Activated naive CD4-positive, alpha-beta T cell treated with anti-CD3 and anti-CD28 coated beads for 36 hours (primary cell): ENCODE measurements at regions of chr12 and their contacts with region 1.

Region 1: DNA sequence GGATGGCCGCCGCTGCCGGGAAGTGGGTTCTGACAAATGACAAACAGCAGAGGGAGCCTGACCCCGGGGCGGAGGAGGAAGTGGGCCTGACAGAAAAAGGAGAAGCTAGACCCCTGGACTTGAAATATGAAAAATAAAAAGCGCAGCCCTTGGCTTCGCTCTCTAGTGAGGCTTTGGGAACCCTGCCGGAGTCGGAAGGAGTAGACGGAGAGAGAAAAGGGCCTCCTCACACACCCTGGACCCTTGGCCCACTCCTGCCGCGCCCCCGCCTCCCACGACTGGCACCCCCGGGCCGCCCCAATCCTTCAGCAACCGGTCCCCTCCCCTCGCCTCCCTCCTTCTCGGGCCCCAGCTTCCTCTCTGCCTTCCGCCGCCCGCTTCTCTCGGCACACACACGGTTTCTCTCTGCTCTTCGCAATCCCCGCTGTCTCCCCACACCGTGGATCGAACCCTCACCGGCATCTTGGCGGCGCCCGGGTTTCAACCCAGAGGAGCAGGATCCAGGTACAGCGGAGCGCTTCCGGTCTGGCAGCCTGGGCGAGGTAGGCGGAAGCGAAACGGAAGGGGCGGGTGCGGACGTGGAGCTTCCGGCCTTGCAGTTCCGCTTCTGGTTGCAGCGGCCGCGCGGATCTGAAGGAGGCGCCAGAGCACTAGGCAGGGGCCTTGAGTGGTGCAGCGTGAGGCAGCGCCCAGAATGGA is at the start of gene ARPC3:
- DNase-seq: peak; percentile 98
- H3K4me3 Mint-ChIP-seq: peak within 1 kb of the TSS; percentile 100
- H3K27ac Mint-ChIP-seq: peak within 1 kb of the TSS; percentile 100
- H3K4me1 Mint-ChIP-seq: peaks cover 38% of the 10 kb centered on the region
- H3K27me3 Mint-ChIP-seq: no peaks in the 10 kb centered on the region
- total RNA-seq, gene ARPC3: 279 to 311 TPM

Region 2: DNA sequence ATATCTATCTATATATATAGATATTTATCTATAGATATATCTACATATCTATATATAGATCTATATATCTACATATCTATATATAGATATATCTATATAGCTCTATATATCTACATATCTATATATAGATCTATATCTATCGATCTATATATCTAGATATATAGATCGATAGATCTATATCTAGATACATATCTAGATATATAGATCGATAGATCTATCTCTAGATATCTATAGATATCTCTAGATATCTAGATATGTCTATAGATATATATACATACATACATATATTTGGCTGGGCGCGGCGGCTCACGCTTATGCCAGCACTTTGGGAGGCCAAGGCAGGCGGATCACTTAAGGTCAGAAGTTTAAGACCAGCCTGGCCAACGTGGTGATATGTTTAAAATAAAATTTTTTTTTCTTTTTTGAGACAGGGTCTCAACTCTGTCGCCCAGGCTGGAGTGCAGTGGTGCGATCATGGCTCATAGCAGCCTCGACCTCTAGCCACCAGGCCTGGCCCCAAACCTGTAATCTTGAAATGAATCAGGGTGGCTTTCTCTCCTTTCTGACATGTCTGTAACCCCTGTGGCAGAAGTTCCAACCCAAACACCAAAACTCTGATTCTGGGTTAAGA is 17.9 kb before region 1 on chr12:
- CTCF ChIA-PET with region 1: interaction called, 29 read pairs
- intact Hi-C with region 1: no loop called
- DNase-seq: peak; percentile 31
- H3K4me3 Mint-ChIP-seq: no peak overlapping the region
- H3K27ac Mint-ChIP-seq: peak overlapping the region; percentile 36
- H3K4me1 Mint-ChIP-seq: peaks cover 3% of the 10 kb centered on the region
- H3K27me3 Mint-ChIP-seq: no peaks in the 10 kb centered on the region

Region 3: DNA sequence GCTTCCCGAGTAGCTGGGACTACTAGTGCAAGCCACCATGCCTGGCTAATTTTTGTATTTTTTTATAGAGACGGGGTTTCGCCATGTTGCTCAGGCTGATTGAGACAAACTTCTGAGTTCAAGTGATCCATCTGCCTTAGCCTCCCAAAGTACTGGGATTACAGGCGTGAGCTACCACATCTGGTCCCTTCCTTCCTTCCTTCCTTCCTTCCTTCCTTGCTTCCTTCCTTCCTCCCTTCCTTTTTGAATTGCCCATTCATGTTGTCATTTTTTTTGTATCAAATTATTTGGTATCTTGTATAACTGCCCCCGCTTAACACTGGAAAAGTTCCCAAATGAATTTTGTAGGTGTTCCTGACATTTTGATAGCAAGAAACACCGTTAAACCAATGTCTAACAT is 63.9 kb after region 1 on chr12:
- CTCF ChIA-PET with region 1: interaction called, 4 read pairs
- intact Hi-C with region 1: loop called (anchors 2 kb)
- DNase-seq: no peak
- H3K4me3 Mint-ChIP-seq: no peak overlapping the region
- H3K27ac Mint-ChIP-seq: no peak overlapping the region
- H3K4me1 Mint-ChIP-seq: peaks cover 2% of the 10 kb centered on the region
- H3K27me3 Mint-ChIP-seq: no peaks in the 10 kb centered on the region

Region 4: DNA sequence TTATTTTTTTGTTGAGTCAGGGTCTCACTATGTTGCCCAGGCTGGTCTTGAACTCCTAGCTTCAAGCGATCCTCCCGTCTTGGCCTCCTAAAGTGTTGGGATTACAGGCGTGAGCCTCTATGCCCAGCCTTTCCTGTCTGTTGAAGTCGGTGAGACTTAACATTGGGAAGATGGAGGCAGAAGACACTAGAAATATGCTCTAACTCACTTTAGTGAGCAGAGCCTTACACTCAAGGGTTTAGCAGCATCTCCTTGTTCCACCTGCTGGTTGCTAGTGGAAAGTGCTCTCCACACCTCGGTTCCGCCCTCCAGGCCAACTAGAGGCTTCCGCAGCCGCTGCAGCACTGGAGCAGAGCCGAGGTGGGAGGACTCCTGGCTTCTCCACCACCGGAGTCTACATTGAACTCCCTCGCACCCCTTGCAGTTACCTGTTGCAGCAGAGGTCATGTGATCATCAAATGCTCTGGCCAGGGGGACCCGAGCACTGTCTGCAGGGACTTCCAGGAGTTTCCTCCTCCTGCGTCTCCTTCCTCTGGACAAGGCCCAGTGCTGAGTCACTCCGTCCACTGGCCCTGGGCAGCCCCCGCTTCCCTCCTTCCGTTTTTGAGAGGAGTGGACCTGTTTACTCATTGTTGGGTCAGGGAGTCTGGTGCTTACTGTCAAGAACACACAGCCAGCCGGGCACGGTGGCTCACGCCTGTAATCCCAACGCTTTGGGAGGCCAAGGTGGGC is 248.4 kb after region 1 on chr12:
- CTCF ChIA-PET with region 1: no interaction called
- intact Hi-C with region 1: loop called (anchors 1 kb)
- DNase-seq: peak; percentile 90
- H3K4me3 Mint-ChIP-seq: no peak overlapping the region
- H3K27ac Mint-ChIP-seq: peak overlapping the region; percentile 57
- H3K4me1 Mint-ChIP-seq: peaks cover 17% of the 10 kb centered on the region
- H3K27me3 Mint-ChIP-seq: no peaks in the 10 kb centered on the region

Region 5: GRCh38 chr12:110888256-110888991 is 438.5 kb after region 1 on chr12:
- CTCF ChIA-PET with region 1: no interaction called
- intact Hi-C with region 1: loop called (anchors 1 kb)
- DNase-seq: no peak
- H3K4me3 Mint-ChIP-seq: no peak overlapping the region
- H3K27ac Mint-ChIP-seq: no peak overlapping the region
- H3K4me1 Mint-ChIP-seq: peaks cover 8% of the 10 kb centered on the region
- H3K27me3 Mint-ChIP-seq: no peaks in the 10 kb centered on the region